GM13977 (cell line): ENCODE measurements at regions of chr4 and their contacts with region 1.

Region 1: DNA sequence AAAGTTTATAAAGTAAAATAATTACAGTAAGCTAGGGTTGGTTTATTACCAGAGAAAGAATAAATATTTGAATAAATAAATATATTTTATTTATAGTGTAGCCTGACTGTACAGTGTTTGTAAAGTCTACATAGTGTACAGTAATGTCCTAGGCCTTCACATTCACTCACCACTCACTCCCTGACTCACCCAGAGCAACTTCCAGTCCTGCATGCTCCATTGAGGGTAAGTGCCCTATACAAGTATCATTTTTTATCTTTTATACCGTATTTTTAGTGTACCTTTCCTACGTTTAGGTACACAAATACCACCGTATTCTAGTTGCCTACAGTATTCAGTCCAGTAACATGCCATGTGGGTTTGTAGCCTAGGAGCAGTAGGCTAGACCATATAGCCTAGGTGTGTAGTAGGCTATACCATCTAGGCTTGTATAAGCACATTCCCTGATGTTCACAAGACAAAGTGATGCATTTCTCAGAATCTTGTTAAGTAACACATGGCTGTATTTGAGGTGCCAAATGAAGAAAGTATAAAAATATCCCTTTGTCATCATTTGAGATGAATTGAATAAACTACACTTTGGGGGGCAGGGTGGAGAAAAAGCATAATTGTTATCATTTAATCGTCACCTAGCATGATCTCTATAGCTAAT is 14.7 kb upstream of the KLHL8 start:
- DNase-seq: no peak
- CTCF ChIP-seq: no peak

Region 2: GRCh38 chr4:86908251-86908657 is 326.9 kb before region 1 on chr4:
- in situ Hi-C with region 1: loop called (anchors 25 kb)
- DNase-seq: no peak
- CTCF ChIP-seq: no peak

Region 3: DNA sequence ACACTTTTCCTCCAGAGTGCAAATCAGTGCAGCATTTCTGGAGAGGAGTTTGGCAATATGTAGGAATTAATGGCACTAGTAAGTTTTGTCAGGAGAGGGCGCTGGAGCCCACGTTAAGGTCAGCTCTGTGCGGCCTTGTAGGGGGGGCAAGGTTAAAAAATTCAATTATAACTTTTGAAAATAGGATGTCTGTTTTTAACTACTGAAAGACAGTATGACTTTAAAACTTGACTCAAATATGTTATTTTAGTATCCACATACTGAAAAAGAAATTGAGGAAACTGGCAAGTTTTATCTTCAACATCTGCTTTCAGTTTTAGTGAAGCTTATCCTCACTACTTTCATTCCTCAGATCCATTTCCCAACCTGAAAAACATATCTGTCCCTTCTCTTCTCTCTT is 118.4 kb after region 1 on chr4:
- in situ Hi-C with region 1: no loop called
- DNase-seq: peak; percentile 41
- CTCF ChIP-seq: peak; percentile 71

Region 4: DNA sequence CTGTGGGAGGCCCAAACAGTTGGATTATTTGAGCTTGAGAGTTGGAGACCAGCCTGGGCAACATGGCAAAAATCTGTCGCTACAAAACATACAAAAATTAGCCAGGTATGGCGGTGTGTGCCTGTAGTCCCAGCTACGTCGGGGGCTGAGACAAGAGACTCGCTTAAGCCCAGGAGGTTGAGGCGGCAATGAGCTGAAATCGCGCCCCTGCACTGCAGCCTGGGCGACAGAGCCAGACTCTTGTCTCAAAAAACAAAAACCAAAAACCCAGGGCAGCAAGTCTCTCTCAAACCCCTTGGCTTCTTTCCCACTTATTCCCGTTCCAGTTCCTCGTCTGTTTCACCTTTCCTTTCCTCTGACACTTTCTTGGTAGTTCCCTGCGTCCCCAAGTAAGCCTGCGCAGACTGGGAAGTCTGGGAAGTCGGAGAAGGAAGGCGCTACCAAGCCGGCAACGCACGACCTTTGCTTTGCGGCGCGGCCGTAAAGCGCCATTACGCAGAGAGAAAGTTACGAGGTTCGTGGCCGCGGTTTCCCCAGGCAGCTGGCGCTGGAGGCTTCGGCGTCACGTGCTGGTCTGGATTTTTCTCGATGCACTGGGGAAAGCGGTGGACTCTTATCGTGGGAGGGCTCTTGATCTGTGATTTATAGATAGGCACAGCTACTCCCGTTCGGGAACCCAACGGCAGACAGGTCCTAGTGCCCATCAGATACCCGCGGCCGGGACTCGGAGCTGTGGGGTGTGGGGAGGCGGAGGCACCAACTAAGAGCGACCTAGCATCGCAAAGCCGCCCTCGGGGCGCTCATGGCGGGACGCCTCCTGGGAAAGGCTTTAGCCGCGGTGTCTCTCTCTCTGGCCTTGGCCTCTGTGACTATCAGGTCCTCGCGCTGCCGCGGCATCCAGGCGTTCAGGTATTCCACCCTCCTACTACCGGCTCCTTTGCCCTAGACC is 187.2 kb after region 1 on chr4 and contains the start of gene NUDT9:
- in situ Hi-C with region 1: no loop called
- DNase-seq: peak; percentile 83
- CTCF ChIP-seq: no peak